MCF 10A (cell line): ENCODE measurements at regions of chr1 and their contacts with region 1.

Region 1: DNA sequence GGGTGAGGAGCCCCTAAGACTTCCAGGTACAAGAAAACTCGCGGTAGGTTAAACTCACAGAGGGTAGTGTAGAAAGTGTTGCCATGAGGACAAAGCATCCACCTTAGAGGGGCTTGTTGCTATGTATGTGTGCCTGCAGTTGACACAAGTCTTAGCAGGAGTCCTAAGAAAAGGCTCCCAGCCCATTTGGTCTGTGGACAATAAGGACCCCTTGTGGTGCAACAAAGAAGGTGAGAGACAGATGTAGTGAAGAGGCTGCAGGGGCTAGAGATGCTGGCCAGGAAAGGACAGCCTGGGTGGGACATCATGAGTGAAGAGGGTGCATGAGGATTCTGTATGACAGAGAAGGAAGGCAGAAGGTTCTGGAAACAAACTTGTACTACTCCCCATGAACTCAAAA is 36.3 kb upstream of the IL10 start:
- DNase-seq: peak; percentile 67
- H3K4me3 Mint-ChIP-seq: no peak overlapping the region
- H3K27ac Mint-ChIP-seq: no peak overlapping the region
- H3K4me1 Mint-ChIP-seq: peaks cover 5% of the 10 kb centered on the region
- H3K27me3 Mint-ChIP-seq: peaks cover 41% of the 10 kb centered on the region
- CTCF ChIP-seq: peak; percentile 30

Region 2: GRCh38 chr1:206716870-206717673 is 91.5 kb before region 1 on chr1:
- CTCF ChIA-PET with region 1: interaction called, 12 read pairs
- POLR2A ChIA-PET with region 1: no interaction called
- intact Hi-C with region 1: no loop called
- DNase-seq: no peak
- H3K4me3 Mint-ChIP-seq: no peak overlapping the region
- H3K27ac Mint-ChIP-seq: peak overlapping the region; percentile 9
- H3K4me1 Mint-ChIP-seq: peaks cover 58% of the 10 kb centered on the region
- H3K27me3 Mint-ChIP-seq: no peaks in the 10 kb centered on the region
- CTCF ChIP-seq: no peak

Region 3: GRCh38 chr1:206785182-206785765 is 23.3 kb before region 1 on chr1:
- CTCF ChIA-PET with region 1: interaction called, 6 read pairs
- POLR2A ChIA-PET with region 1: interaction called, 4 read pairs
- intact Hi-C with region 1: loop called (anchors 1 kb)
- DNase-seq: no peak
- H3K4me3 Mint-ChIP-seq: no peak overlapping the region
- H3K27ac Mint-ChIP-seq: no peak overlapping the region
- H3K4me1 Mint-ChIP-seq: no peaks in the 10 kb centered on the region
- H3K27me3 Mint-ChIP-seq: peaks cover 32% of the 10 kb centered on the region
- CTCF ChIP-seq: no peak

Region 4: DNA sequence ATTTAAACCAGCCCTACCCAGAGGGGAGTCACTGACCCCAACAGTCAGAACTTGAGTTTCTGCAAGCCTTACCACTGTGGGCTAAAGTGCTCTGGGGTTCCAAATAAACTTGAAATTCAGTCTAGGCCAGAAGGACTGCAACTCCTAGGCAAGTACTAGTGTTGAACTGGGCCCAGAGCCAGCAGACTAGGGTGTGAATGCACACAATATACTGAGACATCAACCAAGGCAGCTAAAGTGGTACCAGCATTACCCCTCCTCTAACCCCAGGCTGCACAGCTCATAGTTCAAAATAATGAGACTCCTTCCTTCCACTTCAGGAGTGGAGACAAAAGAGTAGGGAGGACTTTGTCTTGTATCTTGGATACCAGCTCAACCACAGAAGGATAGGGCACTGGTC is 37.9 kb after region 1 on chr1:
- CTCF ChIA-PET with region 1: interaction called, 19 read pairs
- POLR2A ChIA-PET with region 1: no interaction called
- intact Hi-C with region 1: no loop called
- DNase-seq: peak; percentile 34
- H3K4me3 Mint-ChIP-seq: no peak overlapping the region
- H3K27ac Mint-ChIP-seq: no peak overlapping the region
- H3K4me1 Mint-ChIP-seq: peaks cover 21% of the 10 kb centered on the region
- H3K27me3 Mint-ChIP-seq: peaks cover 23% of the 10 kb centered on the region
- CTCF ChIP-seq: no peak

Region 5: DNA sequence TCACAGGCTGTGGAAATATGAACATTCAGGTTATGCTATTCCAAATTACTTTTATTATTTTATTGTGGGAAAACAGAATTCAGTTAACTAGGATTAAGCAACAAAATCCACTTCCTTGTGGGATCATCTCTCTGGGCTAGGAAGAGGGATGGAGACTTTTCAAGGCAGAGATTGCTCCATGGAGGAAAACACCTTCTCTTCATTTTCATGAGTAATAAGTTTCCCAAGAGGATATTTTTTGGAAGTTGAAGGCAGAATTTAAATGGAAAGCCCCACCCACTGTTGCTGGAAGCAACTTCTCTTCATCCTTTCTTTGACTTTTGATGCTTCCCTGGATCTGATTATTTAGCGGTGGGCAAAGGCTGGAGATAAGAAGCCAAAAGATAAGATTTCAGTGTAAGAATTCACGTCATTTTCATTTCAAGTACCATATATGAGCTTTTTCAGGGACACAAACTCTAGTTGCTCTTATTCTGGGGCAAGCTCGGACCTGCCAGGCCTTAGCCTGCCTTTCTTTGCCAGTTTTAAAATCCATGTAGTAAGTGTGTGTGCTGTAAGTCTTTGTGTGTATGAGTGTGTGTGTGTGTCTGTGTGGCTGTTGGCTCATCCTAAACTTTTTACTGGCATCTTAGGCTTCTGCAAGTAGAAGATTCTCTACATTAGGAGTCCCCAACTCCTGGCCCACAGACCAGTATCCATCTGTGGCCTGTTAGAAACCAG is 76.9 kb after region 1 on chr1:
- CTCF ChIA-PET with region 1: interaction called, 24 read pairs
- POLR2A ChIA-PET with region 1: interaction called, 5 read pairs
- intact Hi-C with region 1: no loop called
- DNase-seq: peak; percentile 90
- H3K4me3 Mint-ChIP-seq: peak overlapping the region; percentile 5
- H3K27ac Mint-ChIP-seq: peak overlapping the region; percentile 58
- H3K4me1 Mint-ChIP-seq: peaks cover 66% of the 10 kb centered on the region
- H3K27me3 Mint-ChIP-seq: no peaks in the 10 kb centered on the region
- CTCF ChIP-seq: no peak

Region 6: GRCh38 chr1:207077470-207078377 is 269.1 kb after region 1 on chr1:
- CTCF ChIA-PET with region 1: interaction called, 9 read pairs
- POLR2A ChIA-PET with region 1: no interaction called
- intact Hi-C with region 1: loop called (anchors 1 kb)
- DNase-seq: peak; percentile 96
- H3K4me3 Mint-ChIP-seq: no peak overlapping the region
- H3K27ac Mint-ChIP-seq: no peak overlapping the region
- H3K4me1 Mint-ChIP-seq: peaks cover 23% of the 10 kb centered on the region
- H3K27me3 Mint-ChIP-seq: peaks cover 7% of the 10 kb centered on the region
- CTCF ChIP-seq: peak; percentile 99

Region 7: DNA sequence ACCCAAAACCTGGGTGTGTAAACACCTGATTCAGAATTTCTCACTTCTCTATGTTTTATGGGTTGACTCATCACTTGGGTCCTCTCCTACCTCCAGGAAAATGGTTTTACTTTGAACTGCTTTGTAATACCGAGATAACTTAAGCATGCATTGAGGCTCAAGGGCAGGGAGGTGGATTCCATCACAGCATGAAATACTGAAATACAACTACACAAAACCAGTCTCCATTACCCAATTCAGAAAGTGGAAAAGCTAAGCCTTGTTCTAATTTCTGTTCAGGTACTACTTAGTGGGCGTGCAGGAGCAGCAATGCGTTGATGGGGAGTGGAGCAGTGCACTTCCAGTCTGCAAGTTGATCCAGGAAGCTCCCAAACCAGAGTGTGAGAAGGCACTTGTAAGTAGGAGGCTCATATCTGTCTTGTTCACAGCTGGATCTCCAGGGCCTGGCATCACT is 289.3 kb after region 1 on chr1:
- CTCF ChIA-PET with region 1: no interaction called
- POLR2A ChIA-PET with region 1: no interaction called
- intact Hi-C with region 1: no loop called
- DNase-seq: no peak
- H3K4me3 Mint-ChIP-seq: no peak overlapping the region
- H3K27ac Mint-ChIP-seq: no peak overlapping the region
- H3K4me1 Mint-ChIP-seq: no peaks in the 10 kb centered on the region
- H3K27me3 Mint-ChIP-seq: peaks cover 17% of the 10 kb centered on the region
- CTCF ChIP-seq: no peak